Activated CD8-positive, alpha-beta T cell treated with anti-CD3 and anti-CD28 coated beads, Interleukin-2, amount 10 ng/mL, durations not matched to agents 7 days and 5 days (primary cell): ENCODE measurements at regions of chr9 and their contacts with region 1.

Region 1: GRCh38 chr9:113578882-113579282 is 115.4 kb downstream of the RGS3 start:
- DNase-seq: peak; percentile 94
- ATAC-seq: peak; percentile 75
- H3K4me3 Mint-ChIP-seq: peak overlapping the region; percentile 82
- H3K27ac Mint-ChIP-seq: peak overlapping the region; percentile 99
- H3K4me1 Mint-ChIP-seq: peaks cover 85% of the 10 kb centered on the region
- H3K27me3 Mint-ChIP-seq: no peaks in the 10 kb centered on the region

Region 2: GRCh38 chr9:113401027-113401792 is 177.7 kb before region 1 on chr9 and contains the start of gene ALAD:
- CTCF ChIA-PET with region 1: interaction called, 14 read pairs
- POLR2A ChIA-PET with region 1: no interaction called
- DNase-seq: peak; percentile 99
- ATAC-seq: peak; percentile 100
- H3K4me3 Mint-ChIP-seq: peak within 1 kb of the TSS; percentile 89
- H3K27ac Mint-ChIP-seq: peak within 1 kb of the TSS; percentile 81
- H3K4me1 Mint-ChIP-seq: peaks cover 17% of the 10 kb centered on the region
- H3K27me3 Mint-ChIP-seq: no peaks in the 10 kb centered on the region
- total RNA-seq, gene ALAD: 26.0 to 30.7 TPM

Region 3: DNA sequence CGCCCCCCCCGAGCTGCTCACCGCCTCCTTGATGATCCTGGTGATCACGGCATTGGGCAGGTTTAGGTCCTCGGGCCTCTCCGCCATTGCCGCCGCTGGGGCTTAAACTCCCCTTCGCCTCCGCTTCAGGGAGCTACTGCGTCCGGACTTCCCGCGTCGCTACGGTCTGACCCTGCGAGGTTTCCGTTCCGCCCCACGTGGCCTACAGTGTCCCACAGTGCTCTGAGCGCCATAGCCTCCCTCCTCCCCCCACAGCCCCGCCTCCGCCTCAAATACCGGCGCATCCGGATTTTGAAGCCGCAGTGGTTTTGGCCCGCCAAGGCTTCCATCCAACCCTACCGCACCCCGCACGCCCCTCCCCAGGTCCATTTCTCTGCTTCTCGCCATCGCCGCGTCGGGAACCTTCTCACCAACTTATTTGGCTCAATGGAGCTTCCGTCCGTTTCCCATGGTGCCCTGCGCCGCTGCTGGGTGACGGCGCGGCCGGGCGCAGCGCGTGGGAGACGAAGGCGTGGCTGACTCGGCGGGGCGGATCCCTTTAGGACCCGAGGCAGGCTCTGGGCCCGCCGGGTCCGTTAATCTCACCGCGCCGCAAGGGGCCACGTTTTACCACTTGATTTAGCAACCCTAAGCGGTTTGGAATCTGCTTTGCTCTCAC is 168.5 kb before region 1 on chr9 and contains the starts of genes C9orf43 and POLE3:
- CTCF ChIA-PET with region 1: interaction called, 19 read pairs
- POLR2A ChIA-PET with region 1: interaction called, 9 read pairs
- DNase-seq: peak; percentile 96
- ATAC-seq: peak; percentile 95
- H3K4me3 Mint-ChIP-seq: peak within 1 kb of the TSS; percentile 88
- H3K27ac Mint-ChIP-seq: peak within 1 kb of the TSS; percentile 100
- H3K4me1 Mint-ChIP-seq: peaks cover 35% of the 10 kb centered on the region
- H3K27me3 Mint-ChIP-seq: no peaks in the 10 kb centered on the region
- total RNA-seq, gene C9orf43: 0.34 to 0.60 TPM
- total RNA-seq, gene POLE3: 78.9 to 81.7 TPM

Region 4: GRCh38 chr9:113446323-113446740 is 132.6 kb before region 1 on chr9:
- CTCF ChIA-PET with region 1: interaction called, 41 read pairs
- POLR2A ChIA-PET with region 1: interaction called, 4 read pairs
- DNase-seq: peak; percentile 31
- ATAC-seq: no peak
- H3K4me3 Mint-ChIP-seq: no peak overlapping the region
- H3K27ac Mint-ChIP-seq: no peak overlapping the region
- H3K4me1 Mint-ChIP-seq: peaks cover 3% of the 10 kb centered on the region
- H3K27me3 Mint-ChIP-seq: no peaks in the 10 kb centered on the region

Region 5: DNA sequence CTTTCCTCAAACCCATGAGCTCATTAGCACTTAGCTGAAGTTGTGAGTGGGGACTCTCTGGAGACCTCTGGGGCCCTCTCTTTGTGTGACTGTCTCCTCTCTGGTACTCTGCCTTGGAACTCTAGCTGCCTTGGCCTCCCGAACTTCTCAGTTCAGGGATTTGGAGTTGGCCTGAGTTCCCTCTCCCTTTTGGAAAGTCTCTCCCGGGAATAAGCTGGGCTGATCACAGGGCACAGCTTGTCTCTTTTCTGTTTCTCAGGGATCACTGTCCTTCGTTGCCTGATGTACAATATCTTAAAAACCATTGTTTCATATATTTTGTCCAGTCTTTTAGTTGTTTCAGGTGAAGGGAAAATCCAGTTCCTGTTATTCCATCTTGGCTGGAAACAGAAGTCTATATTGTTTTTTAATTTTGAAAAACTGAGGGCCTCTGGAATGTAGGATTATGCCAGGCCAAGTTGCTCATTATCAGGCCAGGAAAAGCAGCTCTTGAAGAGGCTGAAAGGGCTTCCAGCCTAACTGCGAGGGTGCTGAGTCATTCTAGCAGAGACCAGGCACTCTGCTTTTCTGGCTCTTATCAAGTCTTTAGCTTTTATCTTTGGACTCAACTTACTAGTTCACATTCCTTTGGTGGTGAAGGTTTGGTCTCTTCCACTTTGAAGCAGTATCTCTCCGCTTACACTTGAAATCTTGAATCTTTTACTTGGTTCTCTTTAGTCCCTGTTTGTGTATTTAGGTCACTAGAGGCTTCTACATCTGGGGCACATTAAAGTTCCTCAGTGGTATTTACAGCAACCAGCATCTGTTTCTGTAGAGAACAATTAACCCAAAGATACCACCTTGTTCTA is 123.7 kb before region 1 on chr9:
- CTCF ChIA-PET with region 1: interaction called, 13 read pairs
- POLR2A ChIA-PET with region 1: no interaction called
- DNase-seq: no peak
- ATAC-seq: no peak
- H3K4me3 Mint-ChIP-seq: no peak overlapping the region
- H3K27ac Mint-ChIP-seq: no peak overlapping the region
- H3K4me1 Mint-ChIP-seq: peaks cover 11% of the 10 kb centered on the region
- H3K27me3 Mint-ChIP-seq: no peaks in the 10 kb centered on the region

Region 6: GRCh38 chr9:113511856-113512761 is 66.8 kb before region 1 on chr9:
- CTCF ChIA-PET with region 1: interaction called, 154 read pairs
- POLR2A ChIA-PET with region 1: interaction called, 49 read pairs
- DNase-seq: peak; percentile 90
- ATAC-seq: peak; percentile 75
- H3K4me3 Mint-ChIP-seq: peak overlapping the region; percentile 69
- H3K27ac Mint-ChIP-seq: peak overlapping the region; percentile 96
- H3K4me1 Mint-ChIP-seq: peaks cover 89% of the 10 kb centered on the region
- H3K27me3 Mint-ChIP-seq: no peaks in the 10 kb centered on the region

Region 7: GRCh38 chr9:113591001-113591898 is 12.4 kb after region 1 on chr9:
- CTCF ChIA-PET with region 1: interaction called, 81 read pairs
- POLR2A ChIA-PET with region 1: interaction called, 8 read pairs
- DNase-seq: peak; percentile 62
- ATAC-seq: peak; percentile 35
- H3K4me3 Mint-ChIP-seq: no peak overlapping the region
- H3K27ac Mint-ChIP-seq: no peak overlapping the region
- H3K4me1 Mint-ChIP-seq: peaks cover 51% of the 10 kb centered on the region
- H3K27me3 Mint-ChIP-seq: no peaks in the 10 kb centered on the region

Region 8: DNA sequence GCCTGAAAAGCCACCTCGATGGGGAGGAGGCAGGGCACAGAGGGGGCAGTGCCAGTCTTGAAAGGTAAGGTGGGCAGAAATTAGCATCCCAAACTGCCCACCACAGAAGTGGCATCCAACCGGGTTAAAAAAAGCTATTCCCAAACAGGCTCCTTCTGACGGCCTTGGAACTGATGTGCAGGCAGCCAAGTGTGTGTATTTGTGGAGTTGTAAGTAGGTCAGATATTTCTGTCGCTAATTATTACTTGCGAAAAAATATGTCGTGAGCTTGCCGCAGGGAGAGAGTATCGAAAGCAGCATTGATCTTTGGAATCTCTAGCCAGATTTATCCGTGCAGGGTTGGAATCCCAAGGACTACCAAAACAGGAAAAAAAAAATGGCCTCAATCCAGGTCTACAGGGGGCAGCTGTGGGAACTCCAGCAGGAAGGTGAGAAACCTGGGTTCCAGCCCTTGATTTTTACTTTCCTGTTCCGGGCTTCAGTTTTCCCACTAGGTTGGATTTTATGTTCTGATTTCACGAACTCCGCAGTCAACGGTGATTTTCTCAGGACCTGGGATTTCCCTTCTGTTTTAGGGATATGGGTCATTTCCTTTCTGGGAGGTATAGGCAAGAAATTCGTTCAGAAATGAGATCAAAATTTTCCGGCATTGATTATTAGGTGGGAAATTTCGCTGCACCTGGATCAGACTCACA is 85.4 kb after region 1 on chr9:
- CTCF ChIA-PET with region 1: no interaction called
- POLR2A ChIA-PET with region 1: no interaction called
- DNase-seq: no peak
- ATAC-seq: no peak
- H3K4me3 Mint-ChIP-seq: no peak overlapping the region
- H3K27ac Mint-ChIP-seq: no peak overlapping the region
- H3K4me1 Mint-ChIP-seq: peaks cover 2% of the 10 kb centered on the region
- H3K27me3 Mint-ChIP-seq: peaks cover 26% of the 10 kb centered on the region